ENCODE measurements at regions of chr11 and their contacts with region 1.

Region 1: GRCh38 chr11:33857933-33858371 is 33.9 kb downstream of the LMO2 start:
- DNase-seq: peak; percentile 84
- H3K4me3 ChIP-seq: no peak overlapping the region
- H3K27ac ChIP-seq: no peak overlapping the region
- H3K4me1 ChIP-seq: peaks cover 0 to 5% (median 0%) of the 10 kb centered on the region in 4 donors
- H3K27me3 ChIP-seq: peaks cover 0 to 19% (median 0%) of the 10 kb centered on the region in 3 donors
- CTCF ChIP-seq: peak; percentile 43 to 71 (median 67)
- EP300 ChIP-seq: no peak
- POLR2A ChIP-seq: no peak

Region 2: DNA sequence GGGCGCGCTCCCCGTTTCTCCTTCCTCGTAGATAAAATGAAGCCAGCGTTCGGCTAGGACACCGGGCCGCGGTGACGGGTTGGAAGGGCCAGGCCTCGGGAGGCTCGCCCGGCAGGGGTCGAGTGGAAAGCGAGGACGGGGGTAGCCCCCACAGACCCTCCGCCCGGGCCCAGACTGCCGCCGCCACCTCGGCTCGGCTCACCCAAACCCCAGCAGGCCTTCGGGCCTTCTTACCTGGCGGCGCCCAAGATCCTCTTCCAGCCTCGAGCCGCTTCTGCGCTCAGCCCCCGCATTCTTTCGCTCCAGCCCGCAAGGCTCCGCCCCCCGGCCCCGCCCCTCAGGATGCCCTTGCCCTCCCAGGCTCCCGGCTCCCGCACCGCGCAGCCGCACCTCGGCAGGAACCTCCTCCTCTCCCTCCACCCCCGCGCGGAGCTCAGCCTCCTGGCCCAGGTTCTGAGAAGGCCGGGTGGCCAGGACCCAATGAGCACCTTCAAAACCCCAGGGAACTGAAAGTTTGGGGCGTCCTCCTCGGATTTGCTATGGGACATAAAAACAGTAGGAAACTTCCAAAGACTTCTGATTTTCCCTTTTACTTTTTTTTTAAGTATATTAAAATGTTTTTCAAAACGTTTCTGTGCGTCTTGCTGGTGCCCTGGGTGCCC is 121.7 kb before region 1 on chr11 and contains the start of gene CD59:
- intact Hi-C with region 1: no loop called
- DNase-seq: peak; percentile 98
- H3K4me3 ChIP-seq: peak within 1 kb of the TSS; percentile 73 to 91 (median 89)
- H3K27ac ChIP-seq: peak within 1 kb of the TSS; percentile 82 to 93 (median 92)
- H3K4me1 ChIP-seq: peaks cover 0 to 49% (median 41%) of the 10 kb centered on the region in 4 donors
- H3K27me3 ChIP-seq: no peaks in the 10 kb centered on the region
- CTCF ChIP-seq: no peak
- EP300 ChIP-seq: no peak
- POLR2A ChIP-seq: peak; percentile 81 to 83
- total RNA-seq, gene CD59: 160 to 206 (median 183) TPM

Region 3: DNA sequence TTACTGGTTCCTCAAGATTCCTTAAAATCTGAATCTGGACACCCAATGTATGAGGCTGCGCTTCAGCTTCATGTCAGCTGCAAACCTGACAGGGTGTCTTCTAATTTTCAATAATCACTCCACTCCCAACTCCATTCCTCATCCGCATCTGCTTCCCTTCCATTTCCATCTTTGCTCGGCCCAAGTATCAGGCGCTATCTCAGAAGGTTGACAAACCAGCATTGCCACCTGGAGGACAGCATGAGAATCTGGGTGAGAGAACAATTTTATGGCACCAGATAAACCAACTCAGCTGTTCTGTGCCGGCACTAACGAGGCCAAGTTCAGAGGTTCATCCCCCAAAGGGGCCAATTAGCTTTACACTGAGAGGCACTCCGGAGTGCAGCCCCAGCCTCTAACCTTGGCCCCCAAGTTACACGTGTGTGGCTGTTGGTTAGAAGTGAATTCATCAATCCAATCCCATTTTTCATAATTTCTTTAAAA is 113.1 kb after region 1 on chr11:
- intact Hi-C with region 1: loop called (anchors 5 kb)
- DNase-seq: peak; percentile 68
- H3K4me3 ChIP-seq: no peak overlapping the region
- H3K27ac ChIP-seq: no peak overlapping the region
- H3K4me1 ChIP-seq: no peaks in the 10 kb centered on the region
- H3K27me3 ChIP-seq: no peaks in the 10 kb centered on the region
- CTCF ChIP-seq: peak in 3 of 4 experiments; percentile 23 to 33 (median 23)
- EP300 ChIP-seq: no peak
- POLR2A ChIP-seq: no peak

Region 4: DNA sequence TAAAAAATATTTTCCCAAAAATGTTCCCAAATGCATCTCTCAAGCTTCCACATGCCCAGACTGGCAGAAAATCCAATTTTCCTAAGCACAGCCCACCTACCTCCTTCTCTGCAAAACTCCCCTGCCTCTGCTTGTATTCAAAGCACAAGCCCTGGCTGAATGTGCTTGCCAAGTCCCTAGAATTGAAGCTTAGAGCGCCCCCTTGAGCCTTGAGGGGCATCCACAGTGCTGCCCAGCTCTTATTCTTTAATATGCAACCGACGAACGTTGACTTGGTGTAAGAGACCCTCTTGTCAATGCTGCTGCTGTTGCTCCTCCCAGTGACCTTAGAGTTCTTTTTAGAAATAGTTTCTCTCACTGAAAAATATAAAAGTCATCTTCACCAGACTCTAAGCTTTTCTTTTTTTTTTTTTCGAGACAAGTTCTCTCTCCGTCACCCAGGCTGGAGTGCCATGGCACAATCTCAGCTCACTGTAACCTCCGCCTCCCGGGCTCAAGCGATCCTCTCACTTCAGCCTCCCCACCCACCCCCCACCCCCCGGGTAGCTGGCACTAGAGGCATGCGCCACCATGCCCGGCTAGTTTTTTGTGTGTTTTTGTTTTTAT is 130.1 kb after region 1 on chr11:
- intact Hi-C with region 1: loop called (anchors 5 kb)
- DNase-seq: peak; percentile 80
- H3K4me3 ChIP-seq: no peak overlapping the region
- H3K27ac ChIP-seq: no peak overlapping the region
- H3K4me1 ChIP-seq: no peaks in the 10 kb centered on the region
- H3K27me3 ChIP-seq: peaks cover 0 to 10% (median 0%) of the 10 kb centered on the region in 3 donors
- CTCF ChIP-seq: peak; percentile 22 to 70 (median 46)
- EP300 ChIP-seq: no peak
- POLR2A ChIP-seq: no peak